ENCODE measurements at regions of chr19 and their contacts with region 1.

Region 1: GRCh38 chr19:1020868-1021425 is at the start of gene TMEM259:
- DNase-seq: peak; percentile 98
- H3K4me3 ChIP-seq: peak within 1 kb of the TSS; percentile 84 to 96 (median 89)
- H3K27ac ChIP-seq: peak within 1 kb of the TSS; percentile 95 to 97 (median 97)
- H3K4me1 ChIP-seq: peaks cover 59 to 77% (median 71%) of the 10 kb centered on the region in 4 donors
- H3K27me3 ChIP-seq: no peaks in the 10 kb centered on the region
- CTCF ChIP-seq: no peak
- EP300 ChIP-seq: no peak
- POLR2A ChIP-seq: no peak
- total RNA-seq, gene TMEM259: 129 to 187 (median 160) TPM

Region 2: DNA sequence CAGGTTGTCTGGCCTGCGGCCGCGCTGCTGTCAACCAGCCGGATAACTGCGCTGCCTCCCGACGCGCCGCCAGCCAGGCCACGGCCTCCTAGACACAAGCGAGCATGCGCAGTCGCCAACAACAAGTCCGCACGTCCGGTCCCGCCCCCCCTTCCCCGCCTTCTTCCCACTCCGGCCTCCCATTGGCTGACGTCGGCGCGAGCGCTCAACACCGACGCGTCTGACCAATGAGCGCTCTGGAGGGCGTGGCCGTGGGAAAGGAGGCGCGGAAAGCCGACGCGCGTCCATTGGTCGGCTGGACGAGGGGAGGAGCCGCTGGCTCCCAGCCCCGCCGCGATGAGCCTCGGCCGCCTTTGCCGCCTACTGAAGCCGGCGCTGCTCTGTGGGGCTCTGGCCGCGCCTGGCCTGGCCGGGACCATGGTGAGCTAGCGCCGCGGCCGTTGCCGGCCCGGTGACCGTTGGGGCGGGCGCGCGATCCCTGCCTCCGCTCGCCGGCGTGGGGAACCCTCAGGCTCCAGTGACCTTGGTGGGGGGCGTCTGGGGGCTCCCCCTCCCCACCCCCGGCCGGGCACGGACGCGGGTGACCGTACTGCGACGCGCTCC is 82.9 kb after region 1 on chr19 and contains the start of gene GPX4:
- intact Hi-C with region 1: loop called (anchors 5 kb)
- DNase-seq: peak; percentile 100
- H3K4me3 ChIP-seq: peak within 1 kb of the TSS; percentile 74 to 92 (median 82)
- H3K27ac ChIP-seq: peak within 1 kb of the TSS; percentile 95 to 100 (median 98)
- H3K4me1 ChIP-seq: peaks cover 61 to 81% (median 70%) of the 10 kb centered on the region in 4 donors
- H3K27me3 ChIP-seq: no peaks in the 10 kb centered on the region
- CTCF ChIP-seq: no peak
- EP300 ChIP-seq: no peak
- POLR2A ChIP-seq: peak; percentile 90
- total RNA-seq, gene GPX4: 338 to 386 (median 375) TPM

Measured in esophagus muscularis mucosa (tissue), 4 donors.